Activated CD4-positive, alpha-beta memory T cell treated with anti-CD3 and anti-CD28 coated beads, Interleukin-2, amount 10 ng/mL, durations not matched to agents 7 days and 5 days (primary cell): ENCODE measurements at regions of chr2 and their contacts with region 1.

Region 1: DNA sequence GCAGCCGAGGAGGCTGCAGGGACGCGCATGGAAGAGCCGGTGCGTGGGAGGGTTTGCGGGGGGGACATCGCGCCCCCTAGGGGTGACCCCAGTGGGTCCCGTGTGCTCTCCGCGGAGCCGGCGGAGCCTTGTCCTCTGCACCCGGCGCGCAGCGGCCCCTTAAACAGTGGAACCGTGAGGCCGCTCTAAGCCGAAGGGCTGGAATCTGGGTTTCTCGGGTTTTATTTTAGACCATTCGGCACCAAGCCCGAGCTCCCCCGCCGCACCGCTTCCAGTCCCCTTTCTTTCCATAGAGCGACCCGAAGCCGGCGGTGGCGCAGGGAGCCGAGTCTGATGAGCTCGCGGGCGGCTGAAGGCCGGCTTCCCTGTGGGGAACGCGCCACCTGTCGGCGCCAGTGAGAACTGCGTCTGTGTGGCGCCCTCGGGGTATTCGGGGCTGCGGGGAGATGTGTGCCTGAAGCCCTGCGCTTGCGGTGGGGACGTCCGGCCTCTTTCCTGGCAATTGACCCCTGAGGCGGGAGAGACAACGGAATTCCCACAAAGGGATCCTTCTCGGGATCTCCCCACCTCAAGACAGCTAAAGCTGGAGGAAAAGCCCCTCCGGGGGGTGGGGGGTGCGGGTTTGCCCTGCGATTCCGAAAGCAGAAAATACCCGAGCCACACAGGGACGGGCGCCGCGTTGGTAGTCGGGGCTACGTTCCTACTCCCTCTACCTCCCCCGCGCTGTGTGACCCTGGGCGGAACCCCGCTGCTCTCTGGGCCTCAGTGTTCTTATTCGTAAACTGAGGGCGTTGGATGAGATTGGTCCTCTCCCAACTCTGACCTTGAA is 8.2 kb upstream of the EN1 start:
- DNase-seq: peak; percentile 81
- H3K4me3 Mint-ChIP-seq: peak overlapping the region; percentile 35
- H3K27ac Mint-ChIP-seq: no peak overlapping the region
- H3K4me1 Mint-ChIP-seq: peaks cover 10% of the 10 kb centered on the region
- H3K27me3 Mint-ChIP-seq: peaks cover 86% of the 10 kb centered on the region

Region 2: GRCh38 chr2:118032169-118033013 is 823.3 kb before region 1 on chr2:
- CTCF ChIA-PET with region 1: interaction called, 10 read pairs
- POLR2A ChIA-PET with region 1: no interaction called
- DNase-seq: peak; percentile 44
- H3K4me3 Mint-ChIP-seq: no peak overlapping the region
- H3K27ac Mint-ChIP-seq: no peak overlapping the region
- H3K4me1 Mint-ChIP-seq: no peaks in the 10 kb centered on the region
- H3K27me3 Mint-ChIP-seq: peaks cover 55% of the 10 kb centered on the region

Region 3: GRCh38 chr2:118046634-118047210 is 808.9 kb before region 1 on chr2:
- CTCF ChIA-PET with region 1: interaction called, 16 read pairs
- POLR2A ChIA-PET with region 1: no interaction called
- DNase-seq: no peak
- H3K4me3 Mint-ChIP-seq: no peak overlapping the region
- H3K27ac Mint-ChIP-seq: no peak overlapping the region
- H3K4me1 Mint-ChIP-seq: peaks cover 27% of the 10 kb centered on the region
- H3K27me3 Mint-ChIP-seq: peaks cover 32% of the 10 kb centered on the region

Region 4: DNA sequence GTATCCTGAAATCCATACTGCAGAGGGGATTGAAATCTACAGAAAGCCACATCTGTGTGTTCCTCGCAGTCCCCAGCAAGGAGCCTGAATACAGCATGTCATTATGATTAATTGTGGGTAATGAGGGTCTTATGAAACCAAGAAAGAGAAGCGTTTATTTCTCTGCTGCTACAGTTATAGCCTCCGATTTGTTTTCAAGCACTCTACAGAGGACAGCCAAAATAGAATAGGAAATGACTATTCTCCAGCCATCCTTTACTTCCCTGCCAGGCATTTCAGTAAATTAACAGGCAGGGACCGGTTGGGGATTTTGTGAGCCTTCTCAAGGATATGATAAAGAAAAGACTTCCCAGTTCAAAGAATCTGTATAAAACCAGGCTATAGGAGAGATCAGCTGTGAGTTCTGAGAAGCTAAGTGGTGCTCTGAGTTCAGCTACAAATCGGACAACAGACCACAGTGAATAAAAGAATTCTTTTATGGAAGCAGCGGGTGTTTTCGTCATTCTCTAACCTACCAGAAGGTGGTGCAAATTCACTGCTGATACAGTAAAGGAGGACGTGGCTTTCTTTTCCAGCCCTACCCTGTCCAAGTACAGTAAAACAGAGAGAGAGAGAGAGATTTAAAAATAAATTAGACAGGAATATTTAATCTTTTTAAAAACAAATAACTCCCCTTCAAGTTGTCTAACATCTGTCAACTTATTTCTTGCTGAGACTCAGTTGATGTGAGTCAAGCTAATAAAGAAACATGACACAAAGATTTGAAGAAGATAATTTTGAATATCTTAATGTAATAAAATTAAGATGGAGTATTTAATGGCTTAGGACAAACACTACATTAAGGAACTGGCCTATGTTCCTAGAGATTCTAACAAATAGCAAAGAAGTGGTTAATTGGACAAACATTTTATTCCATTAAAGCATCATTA is 633.7 kb before region 1 on chr2:
- CTCF ChIA-PET with region 1: interaction called, 38 read pairs
- POLR2A ChIA-PET with region 1: interaction called, 3 read pairs
- DNase-seq: peak; percentile 34
- H3K4me3 Mint-ChIP-seq: no peak overlapping the region
- H3K27ac Mint-ChIP-seq: no peak overlapping the region
- H3K4me1 Mint-ChIP-seq: peaks cover 22% of the 10 kb centered on the region
- H3K27me3 Mint-ChIP-seq: peaks cover 70% of the 10 kb centered on the region

Region 5: GRCh38 chr2:118826093-118826492 is 29.6 kb before region 1 on chr2:
- CTCF ChIA-PET with region 1: interaction called, 10 read pairs
- POLR2A ChIA-PET with region 1: no interaction called
- DNase-seq: no peak
- H3K4me3 Mint-ChIP-seq: no peak overlapping the region
- H3K27ac Mint-ChIP-seq: no peak overlapping the region
- H3K4me1 Mint-ChIP-seq: no peaks in the 10 kb centered on the region
- H3K27me3 Mint-ChIP-seq: peaks cover 39% of the 10 kb centered on the region